Calu3 (cell line): ENCODE measurements at regions of chr5 and their contacts with region 1.

Region 1: GRCh38 chr5:55146543-55147151 is 13.3 kb upstream of the GPX8 start:
- DNase-seq: peak; percentile 83
- H3K4me3 Mint-ChIP-seq: no peak overlapping the region
- H3K27ac Mint-ChIP-seq: no peak overlapping the region
- H3K4me1 Mint-ChIP-seq: no peaks in the 10 kb centered on the region
- H3K27me3 Mint-ChIP-seq: peaks cover 65% of the 10 kb centered on the region
- CTCF ChIP-seq: peak; percentile 82

Region 2: DNA sequence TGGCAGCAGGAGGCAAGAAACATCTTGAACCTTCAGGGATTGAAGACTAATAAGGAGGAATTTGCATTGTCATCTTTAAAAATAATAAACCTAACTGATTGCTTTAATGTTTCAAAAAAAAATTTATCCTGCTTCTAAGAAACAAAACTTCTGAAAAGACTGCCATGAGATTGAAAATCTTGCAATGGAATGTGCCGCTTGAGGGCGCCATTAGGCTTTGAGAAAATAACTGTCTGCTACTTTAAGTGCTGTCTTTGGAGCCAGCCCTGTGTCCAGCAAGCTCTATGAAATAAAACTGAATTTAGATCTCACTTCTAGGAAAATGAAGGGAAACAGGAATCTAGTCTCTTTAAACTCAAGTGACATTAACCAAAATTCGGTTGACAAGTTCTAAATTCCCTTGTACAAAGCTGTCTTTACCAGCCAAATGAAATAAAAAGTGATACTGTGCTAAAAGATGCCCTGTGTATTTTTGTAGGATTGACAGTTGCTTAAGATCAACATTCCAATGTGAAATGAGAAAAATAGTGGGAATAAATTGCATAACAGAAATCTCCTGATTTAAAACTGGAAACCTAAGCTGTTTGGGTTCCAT is 240.6 kb before region 1 on chr5:
- CTCF ChIA-PET with region 1: interaction called, 4 read pairs
- intact Hi-C with region 1: loop called (anchors 1 kb)
- DNase-seq: peak; percentile 68
- H3K4me3 Mint-ChIP-seq: no peak overlapping the region
- H3K27ac Mint-ChIP-seq: no peak overlapping the region
- H3K4me1 Mint-ChIP-seq: no peaks in the 10 kb centered on the region
- H3K27me3 Mint-ChIP-seq: peaks cover 94% of the 10 kb centered on the region
- CTCF ChIP-seq: peak; percentile 13

Region 3: GRCh38 chr5:54944364-54944763 is 202.3 kb before region 1 on chr5:
- CTCF ChIA-PET with region 1: interaction called, 12 read pairs
- intact Hi-C with region 1: loop called (anchors 1 kb)
- DNase-seq: peak; percentile 21
- H3K4me3 Mint-ChIP-seq: no peak overlapping the region
- H3K27ac Mint-ChIP-seq: no peak overlapping the region
- H3K4me1 Mint-ChIP-seq: no peaks in the 10 kb centered on the region
- H3K27me3 Mint-ChIP-seq: peaks cover 48% of the 10 kb centered on the region
- CTCF ChIP-seq: peak; percentile 67